Ovary (tissue), 10 donors: ENCODE measurements at regions of chrX and their contacts with region 1.

Region 1: GRCh38 chrX:15947648-15948317 is 93.2 kb upstream of the AP1S2 start:
- DNase-seq: no peak
- H3K4me3 ChIP-seq: no peak overlapping the region
- H3K27ac ChIP-seq: no peak overlapping the region
- H3K4me1 ChIP-seq: no peaks in the 10 kb centered on the region
- H3K27me3 ChIP-seq: no peaks in the 10 kb centered on the region
- CTCF ChIP-seq: no peak
- EP300 ChIP-seq: no peak
- POLR2A ChIP-seq: no peak

Region 2: DNA sequence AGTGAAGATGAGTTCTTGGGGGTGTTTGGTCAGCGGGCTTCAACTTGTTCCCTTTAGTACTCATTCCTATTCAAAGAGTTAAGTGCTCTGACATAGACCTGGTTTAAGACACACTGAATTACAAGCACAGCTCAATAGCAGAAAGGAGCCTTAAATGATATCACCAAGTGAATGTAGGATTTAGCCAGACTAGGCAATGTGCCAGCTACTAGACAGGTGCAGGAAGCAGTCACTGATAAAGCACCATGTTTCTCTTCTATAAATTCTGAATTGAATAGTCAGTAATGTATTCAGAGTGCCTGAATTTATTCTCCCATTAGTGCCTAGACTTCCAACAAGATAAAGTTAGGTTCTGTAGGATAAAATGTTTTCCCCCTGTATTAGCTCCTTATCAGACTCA is 741.5 kb before region 1 on chrX:
- intact Hi-C with region 1: loop called in 1 of 4 experiments (anchors 5 kb)
- DNase-seq: no peak
- H3K4me3 ChIP-seq: no peak overlapping the region
- H3K27ac ChIP-seq: no peak overlapping the region
- H3K4me1 ChIP-seq: no peaks in the 10 kb centered on the region
- H3K27me3 ChIP-seq: no peaks in the 10 kb centered on the region
- CTCF ChIP-seq: no peak
- EP300 ChIP-seq: no peak
- POLR2A ChIP-seq: no peak